Panc1 (cell line): ENCODE measurements at regions of chrX and their contacts with region 1.

Region 1: GRCh38 chrX:103686199-103687072 is at the start of gene MORF4L2:
- DNase-seq: peak; percentile 99
- ATAC-seq: peak; percentile 92
- H3K4me3 ChIP-seq: peak within 1 kb of the TSS; percentile 92 to 99
- H3K27ac ChIP-seq: peak within 1 kb of the TSS; percentile 99
- H3K4me1 ChIP-seq: peaks cover 31% of the 10 kb centered on the region
- H3K27me3 ChIP-seq: no peaks in the 10 kb centered on the region
- CTCF ChIP-seq: no peak
- total RNA-seq, gene MORF4L2: 500 TPM

Region 2: GRCh38 chrX:103158321-103158630 is 528.2 kb before region 1 on chrX:
- CTCF ChIA-PET with region 1: no interaction called
- POLR2A ChIA-PET with region 1: no interaction called
- in situ Hi-C with region 1: no loop called
- intact Hi-C with region 1: no loop called
- DNase-seq: no peak
- ATAC-seq: no peak
- H3K4me3 ChIP-seq: no peak overlapping the region
- H3K27ac ChIP-seq: no peak overlapping the region
- H3K4me1 ChIP-seq: peaks cover 6% of the 10 kb centered on the region
- H3K27me3 ChIP-seq: no peaks in the 10 kb centered on the region
- CTCF ChIP-seq: peak; percentile 54

Region 3: GRCh38 chrX:103533511-103534216 is 152.8 kb before region 1 on chrX:
- CTCF ChIA-PET with region 1: no interaction called
- POLR2A ChIA-PET with region 1: no interaction called
- in situ Hi-C with region 1: no loop called
- intact Hi-C with region 1: loop called (anchors 5 kb)
- DNase-seq: peak; percentile 64
- ATAC-seq: peak; percentile 90
- H3K4me3 ChIP-seq: peak overlapping the region; percentile 38 to 54
- H3K27ac ChIP-seq: peak overlapping the region; percentile 63; the same call in 1 of the 2 replicates
- H3K4me1 ChIP-seq: no peaks in the 10 kb centered on the region
- H3K27me3 ChIP-seq: no peaks in the 10 kb centered on the region
- CTCF ChIP-seq: peak; percentile 86

Region 4: GRCh38 chrX:103774070-103774642 is 87.7 kb after region 1 on chrX:
- CTCF ChIA-PET with region 1: interaction called, 6 read pairs
- POLR2A ChIA-PET with region 1: no interaction called
- in situ Hi-C with region 1: no loop called
- intact Hi-C with region 1: loop called (anchors 5 kb)
- DNase-seq: no peak
- ATAC-seq: peak; percentile 83
- H3K4me3 ChIP-seq: no peak overlapping the region
- H3K27ac ChIP-seq: no peak overlapping the region
- H3K4me1 ChIP-seq: no peaks in the 10 kb centered on the region; the same call in none of the 2 replicates
- H3K27me3 ChIP-seq: peaks cover 14% of the 10 kb centered on the region
- CTCF ChIP-seq: peak; percentile 76

Region 5: GRCh38 chrX:103792916-103793544 is 106.6 kb after region 1 on chrX:
- CTCF ChIA-PET with region 1: no interaction called
- POLR2A ChIA-PET with region 1: interaction called, 10 read pairs
- in situ Hi-C with region 1: no loop called
- intact Hi-C with region 1: no loop called
- DNase-seq: no peak
- ATAC-seq: no peak
- H3K4me3 ChIP-seq: no peak overlapping the region
- H3K27ac ChIP-seq: no peak overlapping the region
- H3K4me1 ChIP-seq: no peaks in the 10 kb centered on the region
- H3K27me3 ChIP-seq: peaks cover 29% of the 10 kb centered on the region; the same call in 1 of the 2 replicates
- CTCF ChIP-seq: no peak

Region 6: GRCh38 chrX:103817502-103817901 is 131.1 kb after region 1 on chrX:
- CTCF ChIA-PET with region 1: no interaction called
- POLR2A ChIA-PET with region 1: no interaction called
- in situ Hi-C with region 1: no loop called
- intact Hi-C with region 1: loop called (anchors 1 kb)
- DNase-seq: peak; percentile 46
- ATAC-seq: peak; percentile 88
- H3K4me3 ChIP-seq: no peak overlapping the region
- H3K27ac ChIP-seq: no peak overlapping the region
- H3K4me1 ChIP-seq: no peaks in the 10 kb centered on the region
- H3K27me3 ChIP-seq: no peaks in the 10 kb centered on the region
- CTCF ChIP-seq: peak; percentile 70; the same call in 1 of the 2 replicates

Region 7: GRCh38 chrX:105608745-105609144 is 1922.3 kb after region 1 on chrX:
- CTCF ChIA-PET with region 1: no interaction called
- POLR2A ChIA-PET with region 1: no interaction called
- in situ Hi-C with region 1: no loop called
- intact Hi-C with region 1: no loop called
- DNase-seq: no peak
- ATAC-seq: no peak
- H3K4me3 ChIP-seq: no peak overlapping the region
- H3K27ac ChIP-seq: no peak overlapping the region
- H3K4me1 ChIP-seq: no peaks in the 10 kb centered on the region
- H3K27me3 ChIP-seq: no peaks in the 10 kb centered on the region
- CTCF ChIP-seq: no peak